CD8-positive, alpha-beta memory T cell (primary cell): ENCODE measurements at regions of chr3 and their contacts with region 1.

Region 1: GRCh38 chr3:138118612-138119422 is 3.4 kb upstream of the DZIP1L start:
- DNase-seq: peak in 1 of 5 donors; percentile 54
- H3K4me3 ChIP-seq: no peak overlapping the region
- H3K4me3 Mint-ChIP-seq: no peak overlapping the region
- H3K27ac ChIP-seq: no peak overlapping the region
- H3K27ac Mint-ChIP-seq: no peak overlapping the region
- H3K4me1 ChIP-seq: no peaks in the 10 kb centered on the region
- H3K4me1 Mint-ChIP-seq: peaks cover 5 to 12% (median 9%) of the 10 kb centered on the region in 3 donors
- H3K27me3 ChIP-seq: peaks cover 5% of the 10 kb centered on the region
- H3K27me3 Mint-ChIP-seq: peaks cover 28 to 61% of the 10 kb centered on the region in 2 donors

Region 2: GRCh38 chr3:138068579-138069174 is 50.1 kb before region 1 on chr3:
- CTCF ChIA-PET with region 1: interaction called, 18 read pairs
- POLR2A ChIA-PET with region 1: no interaction called
- DNase-seq: peak; percentile 46 to 73 (median 52)
- H3K4me3 ChIP-seq: no peak overlapping the region
- H3K4me3 Mint-ChIP-seq: no peak overlapping the region
- H3K27ac ChIP-seq: no peak overlapping the region
- H3K27ac Mint-ChIP-seq: no peak overlapping the region
- H3K4me1 ChIP-seq: no peaks in the 10 kb centered on the region
- H3K4me1 Mint-ChIP-seq: no peaks in the 10 kb centered on the region
- H3K27me3 ChIP-seq: no peaks in the 10 kb centered on the region
- H3K27me3 Mint-ChIP-seq: peaks cover 5 to 28% of the 10 kb centered on the region in 2 donors